Common myeloid progenitor, CD34-positive (primary cell): ENCODE measurements at regions of chr14 and their contacts with region 1.

Region 1: DNA sequence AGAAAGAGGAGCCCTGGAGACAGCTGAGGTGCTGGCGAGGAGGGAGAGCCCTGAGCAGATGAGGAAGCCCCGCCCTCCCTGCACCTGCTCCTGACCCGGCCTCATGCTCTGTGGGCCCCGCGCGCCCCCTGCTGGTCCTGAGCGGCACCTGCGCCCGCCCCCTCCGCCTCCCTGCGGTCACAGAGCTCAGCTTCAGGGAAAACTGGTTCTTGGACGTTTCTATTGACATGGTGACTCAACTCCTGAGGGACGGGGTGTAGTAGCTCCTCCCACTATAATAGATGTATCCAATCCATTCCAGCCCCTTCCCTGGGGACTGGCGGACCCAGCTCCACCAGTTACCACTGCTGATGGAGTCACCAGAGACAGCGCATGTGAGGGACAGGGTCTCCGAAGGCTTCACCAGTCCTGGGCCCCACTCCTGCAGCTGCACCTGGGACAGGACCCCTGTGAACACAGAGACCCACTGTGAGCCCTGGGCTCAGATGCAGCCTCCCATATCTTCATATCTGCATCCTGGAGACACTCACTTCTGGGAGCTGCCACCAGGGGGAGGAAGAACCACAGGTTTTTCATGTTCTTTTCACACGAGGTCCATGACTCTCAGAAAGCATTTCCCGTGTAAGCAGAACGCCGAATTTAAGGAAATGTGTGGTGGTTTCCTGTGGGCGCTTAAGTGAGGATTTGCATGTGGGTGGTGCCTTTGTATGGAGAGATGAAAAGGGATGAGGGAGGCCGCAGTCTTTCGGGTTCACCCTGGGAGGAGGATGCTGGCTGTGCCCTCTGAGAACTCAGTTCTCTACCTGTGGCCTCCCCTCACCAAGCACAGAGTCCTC is 1346.4 kb downstream of the TMEM121 start:
- DNase-seq: peak; percentile 85 to 88 (median 87)
- H3K4me3 ChIP-seq: peak overlapping the region in 4 of 7 experiments; percentile 27 to 62 (median 43)
- H3K27ac ChIP-seq: peak overlapping the region in 1 of 2 experiments; percentile 55
- H3K4me1 ChIP-seq: peaks cover 15 to 57% (median 47%) of the 10 kb centered on the region in 4 experiments
- H3K27me3 ChIP-seq: peaks cover 0 to 2% (median 0%) of the 10 kb centered on the region in 5 experiments

Region 2: DNA sequence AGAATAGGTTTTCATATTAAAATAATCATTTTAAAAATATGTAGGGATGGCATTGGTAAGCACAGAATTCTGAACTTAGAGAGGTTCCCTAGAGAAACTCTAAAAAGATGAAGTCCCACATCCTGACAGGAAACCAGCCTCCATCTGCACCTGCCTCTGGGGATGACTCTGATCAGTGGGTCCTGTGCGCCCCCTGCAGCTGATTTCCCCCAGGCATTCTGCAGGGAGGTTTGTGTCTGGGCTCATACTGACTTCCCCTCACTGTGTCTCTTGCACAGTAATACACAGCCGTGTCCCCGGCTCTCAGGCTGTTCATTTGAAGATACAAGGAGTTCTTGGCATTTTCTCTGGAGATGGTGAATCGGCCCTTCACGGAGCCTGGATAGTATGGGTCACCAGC is 743.6 kb before region 1 on chr14:
- CTCF ChIA-PET with region 1: no interaction called
- POLR2A ChIA-PET with region 1: no interaction called
- DNase-seq: peak; percentile 72 to 92 (median 90)
- H3K4me3 ChIP-seq: no peak overlapping the region
- H3K27ac ChIP-seq: peak overlapping the region in 1 of 2 experiments; percentile 59
- H3K4me1 ChIP-seq: peaks cover 0 to 17% (median 12%) of the 10 kb centered on the region in 4 experiments
- H3K27me3 ChIP-seq: peaks cover 0 to 31% (median 0%) of the 10 kb centered on the region in 5 experiments

Region 3: GRCh38 chr14:106790189-106791036 is 82.4 kb before region 1 on chr14:
- CTCF ChIA-PET with region 1: interaction called, 10 read pairs
- POLR2A ChIA-PET with region 1: interaction called, 3 read pairs
- DNase-seq: peak; percentile 79 to 86 (median 86)
- H3K4me3 ChIP-seq: no peak overlapping the region
- H3K27ac ChIP-seq: no peak overlapping the region
- H3K4me1 ChIP-seq: peaks cover 12 to 50% (median 24%) of the 10 kb centered on the region in 4 experiments
- H3K27me3 ChIP-seq: no peaks in the 10 kb centered on the region

Region 4: DNA sequence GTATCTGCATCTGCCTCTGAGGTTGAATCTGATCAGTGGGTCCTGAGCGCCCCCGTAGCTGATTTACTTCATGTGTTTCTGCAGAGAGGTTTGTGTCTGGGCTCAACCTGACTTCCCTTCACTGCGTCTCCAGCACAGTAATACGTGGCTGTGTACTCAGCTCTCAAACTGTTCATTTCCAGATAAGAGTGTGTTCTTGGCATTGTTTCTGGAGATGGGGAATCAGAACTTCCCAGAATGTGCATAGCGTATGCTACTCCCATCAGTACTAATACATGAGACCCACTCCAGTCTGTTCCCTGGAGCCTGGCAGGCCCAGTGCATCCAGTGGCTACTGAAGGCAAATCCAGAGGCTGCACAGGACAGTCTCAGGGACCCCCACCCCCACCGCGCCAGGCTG is 49.3 kb before region 1 on chr14:
- CTCF ChIA-PET with region 1: interaction called, 16 read pairs
- POLR2A ChIA-PET with region 1: no interaction called
- DNase-seq: no peak
- H3K4me3 ChIP-seq: no peak overlapping the region
- H3K27ac ChIP-seq: no peak overlapping the region
- H3K4me1 ChIP-seq: peaks cover 0 to 24% (median 9%) of the 10 kb centered on the region in 4 experiments
- H3K27me3 ChIP-seq: no peaks in the 10 kb centered on the region

Region 5: GRCh38 chr14:106831322-106831720 is 41.5 kb before region 1 on chr14:
- CTCF ChIA-PET with region 1: interaction called, 509 read pairs
- POLR2A ChIA-PET with region 1: no interaction called
- DNase-seq: peak; percentile 76 to 83 (median 82)
- H3K4me3 ChIP-seq: no peak overlapping the region
- H3K27ac ChIP-seq: no peak overlapping the region
- H3K4me1 ChIP-seq: peaks cover 0 to 3% (median under 1%) of the 10 kb centered on the region in 4 experiments
- H3K27me3 ChIP-seq: no peaks in the 10 kb centered on the region

Region 6: GRCh38 chr14:106844608-106845285 is 28.1 kb before region 1 on chr14:
- CTCF ChIA-PET with region 1: interaction called, 509 read pairs
- POLR2A ChIA-PET with region 1: interaction called, 11 read pairs
- DNase-seq: peak; percentile 87 to 94 (median 93)
- H3K4me3 ChIP-seq: peak overlapping the region; percentile 70 to 96 (median 88)
- H3K27ac ChIP-seq: peak overlapping the region; percentile 92 to 97
- H3K4me1 ChIP-seq: peaks cover 25 to 93% (median 72%) of the 10 kb centered on the region in 4 experiments
- H3K27me3 ChIP-seq: no peaks in the 10 kb centered on the region

Region 7: DNA sequence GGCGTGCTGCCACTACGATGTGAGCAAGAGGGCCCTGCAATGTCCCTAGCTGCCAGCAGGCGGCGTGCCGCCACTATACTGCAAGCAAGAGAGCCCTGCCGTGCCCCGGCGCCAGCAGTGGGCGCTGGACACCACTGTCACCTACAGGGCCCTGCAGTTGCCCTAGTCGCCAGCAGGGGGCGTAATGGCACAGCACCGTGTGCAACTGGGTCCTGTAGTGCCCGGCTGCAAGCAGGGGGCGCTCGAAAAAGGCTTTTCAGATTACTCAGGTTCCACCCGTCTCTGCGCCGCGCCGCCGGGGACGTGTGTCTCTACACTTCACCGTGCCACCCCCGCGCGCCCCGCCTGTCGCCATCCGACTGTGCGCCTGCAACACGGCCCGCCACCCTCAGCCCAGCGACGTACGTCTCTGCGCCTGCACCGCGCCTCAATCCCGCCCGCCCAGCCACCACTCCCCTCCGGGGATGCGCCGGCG is 10.4 kb after region 1 on chr14:
- CTCF ChIA-PET with region 1: interaction called, 25 read pairs
- POLR2A ChIA-PET with region 1: no interaction called
- DNase-seq: peak; percentile 81 to 84 (median 82)
- H3K4me3 ChIP-seq: no peak overlapping the region
- H3K27ac ChIP-seq: no peak overlapping the region
- H3K4me1 ChIP-seq: peaks cover 0 to 1% (median 0%) of the 10 kb centered on the region in 4 experiments
- H3K27me3 ChIP-seq: no peaks in the 10 kb centered on the region